IMR-90 (cell line): ENCODE measurements at regions of chr1 and their contacts with region 1.

Region 1: DNA sequence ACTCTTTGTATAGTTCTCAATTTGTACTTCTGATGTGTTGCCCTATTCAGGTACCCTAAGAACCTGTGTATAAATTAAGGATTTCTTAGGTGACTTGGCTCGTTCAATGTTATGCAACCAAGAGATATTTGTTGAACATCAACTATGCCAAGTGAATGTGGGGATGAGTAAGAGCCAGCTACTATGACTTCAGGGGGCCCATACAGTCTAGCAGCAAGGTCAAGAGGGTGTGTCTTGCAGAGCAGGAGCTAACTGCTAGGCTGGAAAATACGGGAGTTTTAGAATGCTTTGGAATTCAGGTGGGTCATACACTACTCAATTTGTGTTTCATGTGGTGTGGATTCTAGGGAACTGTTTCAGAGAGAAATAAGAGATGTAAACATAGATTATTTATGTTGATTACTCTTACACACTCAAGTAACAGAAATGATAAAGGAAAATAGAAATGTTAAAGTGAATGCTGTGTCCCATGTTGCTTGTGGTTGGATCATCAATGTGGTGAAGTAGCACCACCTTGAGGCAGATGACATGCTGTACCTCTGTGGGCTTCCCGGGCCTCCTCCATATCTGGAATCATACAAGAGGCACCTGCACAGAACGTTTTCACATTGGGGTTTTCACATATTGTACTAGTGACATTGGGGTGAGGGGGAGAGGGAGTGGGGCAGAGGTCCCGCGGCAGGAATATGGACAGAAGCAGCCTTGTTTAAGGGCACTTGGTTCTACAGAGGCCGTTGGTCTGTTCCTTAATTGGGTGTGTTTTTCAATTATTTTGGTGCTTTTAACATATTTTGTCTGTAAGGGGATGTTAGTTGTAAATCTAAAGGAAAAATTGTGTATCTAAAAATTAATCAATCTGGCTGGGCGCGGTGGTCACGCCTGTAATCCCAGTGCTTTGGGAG is 12.4 kb downstream of the ARPC5 start:
- DNase-seq: peak; percentile 78
- ATAC-seq: peak; percentile 86
- H3K4me3 ChIP-seq: no peak overlapping the region
- H3K27ac ChIP-seq: no peak overlapping the region
- H3K4me1 ChIP-seq: peaks cover 3% of the 10 kb centered on the region
- H3K27me3 ChIP-seq: no peaks in the 10 kb centered on the region
- CTCF ChIP-seq: peak; percentile 73
- POLR2A ChIP-seq: no peak
- RAD21 ChIP-seq: peak; percentile 85

Region 2: DNA sequence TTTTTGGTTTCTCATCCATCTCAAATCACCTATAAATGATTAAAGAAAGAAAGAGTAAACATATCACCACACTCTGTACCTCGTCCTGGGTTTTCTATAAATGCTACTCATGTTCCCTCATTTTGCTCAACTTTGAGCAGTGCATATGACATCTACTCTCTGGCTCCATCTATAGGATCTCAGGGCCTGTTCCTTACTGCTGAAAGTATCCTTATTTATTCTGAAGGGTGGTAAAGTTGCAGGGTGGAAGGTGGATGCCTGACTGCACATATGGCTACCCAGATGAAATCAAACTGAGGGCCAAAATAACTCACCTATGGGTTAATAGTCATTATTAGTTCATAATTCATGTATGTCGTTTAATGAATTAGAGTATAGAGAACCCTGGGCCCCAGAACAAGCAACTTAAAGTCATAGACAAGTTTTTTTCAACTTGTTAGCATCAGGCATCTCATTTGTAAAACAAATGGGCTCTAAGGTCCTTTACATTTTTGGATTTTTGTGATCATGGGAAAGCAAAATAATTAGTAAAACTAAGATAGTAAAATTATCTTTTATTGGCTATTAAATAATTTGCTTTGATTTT is 79.4 kb before region 1 on chr1:
- CTCF ChIA-PET with region 1: interaction called, 3 read pairs
- POLR2A ChIA-PET with region 1: no interaction called
- dilution Hi-C with region 1: no loop called
- in situ Hi-C with region 1: no loop called
- intact Hi-C with region 1: loop called (anchors 1 kb)
- DNase-seq: peak; percentile 74
- ATAC-seq: peak; percentile 99
- H3K4me3 ChIP-seq: no peak overlapping the region
- H3K27ac ChIP-seq: no peak overlapping the region
- H3K4me1 ChIP-seq: no peaks in the 10 kb centered on the region; the same call in 1 of the 2 replicates
- H3K27me3 ChIP-seq: no peaks in the 10 kb centered on the region
- CTCF ChIP-seq: peak; percentile 79
- POLR2A ChIP-seq: no peak
- RAD21 ChIP-seq: peak; percentile 82

Region 3: DNA sequence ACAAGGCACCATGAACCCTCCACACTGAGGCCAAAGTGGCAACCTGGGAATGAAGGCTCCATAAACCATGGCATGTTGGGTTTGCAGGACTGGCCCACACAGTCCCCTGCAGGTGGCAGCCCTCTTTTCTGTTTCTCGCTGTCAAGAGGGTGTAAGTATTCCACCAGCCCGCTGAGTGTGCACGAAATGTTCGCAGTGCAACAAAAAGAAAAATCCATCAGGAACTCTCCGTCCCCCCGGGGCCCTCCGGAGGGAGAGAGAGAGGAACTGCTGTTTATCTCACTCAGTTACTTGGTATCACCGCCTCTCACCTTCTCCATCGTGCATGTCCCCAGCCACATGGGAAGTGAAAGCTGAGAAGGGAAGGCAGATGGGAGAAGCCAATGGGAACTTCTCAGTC is 71.2 kb before region 1 on chr1:
- CTCF ChIA-PET with region 1: no interaction called
- POLR2A ChIA-PET with region 1: no interaction called
- dilution Hi-C with region 1: no loop called
- in situ Hi-C with region 1: no loop called
- intact Hi-C with region 1: loop called (anchors 2 kb)
- DNase-seq: no peak
- ATAC-seq: no peak
- H3K4me3 ChIP-seq: no peak overlapping the region
- H3K27ac ChIP-seq: no peak overlapping the region
- H3K4me1 ChIP-seq: peaks cover 3% of the 10 kb centered on the region
- H3K27me3 ChIP-seq: no peaks in the 10 kb centered on the region
- CTCF ChIP-seq: no peak
- POLR2A ChIP-seq: no peak
- RAD21 ChIP-seq: no peak

Region 4: GRCh38 chr1:183580281-183580682 is 42.9 kb before region 1 on chr1:
- CTCF ChIA-PET with region 1: no interaction called
- POLR2A ChIA-PET with region 1: no interaction called
- dilution Hi-C with region 1: no loop called
- in situ Hi-C with region 1: no loop called
- intact Hi-C with region 1: no loop called
- DNase-seq: no peak
- ATAC-seq: no peak
- H3K4me3 ChIP-seq: no peak overlapping the region
- H3K27ac ChIP-seq: no peak overlapping the region
- H3K4me1 ChIP-seq: 0 out of 2 replicates have a peak, but pooled peaks cover 4% of the 10 kb centered on the region
- H3K27me3 ChIP-seq: peaks cover 6% of the 10 kb centered on the region
- CTCF ChIP-seq: no peak
- POLR2A ChIP-seq: no peak
- RAD21 ChIP-seq: no peak

Region 5: DNA sequence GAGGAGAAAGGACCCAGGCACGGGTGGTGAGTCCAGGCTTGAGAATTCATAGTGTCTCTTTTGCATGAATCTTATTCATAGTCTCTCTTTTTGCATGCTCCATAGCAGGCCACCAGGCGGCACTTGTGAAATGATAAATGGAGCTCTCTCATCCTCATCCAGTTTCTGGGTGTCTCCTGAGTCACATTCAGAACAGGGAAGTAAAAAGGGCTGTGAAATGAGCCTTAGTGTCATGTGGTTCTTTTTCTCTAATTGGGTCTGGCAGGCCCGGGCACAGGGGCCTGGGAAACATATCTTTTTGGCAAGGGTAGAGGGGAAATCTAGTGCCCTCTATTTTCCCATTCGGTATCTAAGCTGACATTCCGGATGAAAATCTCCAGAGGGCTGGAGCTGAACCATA is 13.8 kb before region 1 on chr1:
- CTCF ChIA-PET with region 1: interaction called, 5 read pairs
- POLR2A ChIA-PET with region 1: no interaction called
- dilution Hi-C with region 1: no loop called
- in situ Hi-C with region 1: no loop called
- intact Hi-C with region 1: loop called (anchors 1 kb)
- DNase-seq: peak; percentile 81
- ATAC-seq: peak; percentile 54
- H3K4me3 ChIP-seq: no peak overlapping the region
- H3K27ac ChIP-seq: peak overlapping the region; percentile 24
- H3K4me1 ChIP-seq: peaks cover 20% of the 10 kb centered on the region
- H3K27me3 ChIP-seq: no peaks in the 10 kb centered on the region
- CTCF ChIP-seq: peak; percentile 55
- POLR2A ChIP-seq: no peak
- RAD21 ChIP-seq: peak; percentile 61

Region 6: GRCh38 chr1:183932412-183932811 is 309.3 kb after region 1 on chr1:
- CTCF ChIA-PET with region 1: no interaction called
- POLR2A ChIA-PET with region 1: no interaction called
- dilution Hi-C with region 1: no loop called
- in situ Hi-C with region 1: no loop called
- intact Hi-C with region 1: no loop called
- DNase-seq: peak; percentile 90
- ATAC-seq: peak; percentile 89
- H3K4me3 ChIP-seq: no peak overlapping the region
- H3K27ac ChIP-seq: no peak overlapping the region
- H3K4me1 ChIP-seq: peaks cover 3% of the 10 kb centered on the region
- H3K27me3 ChIP-seq: no peaks in the 10 kb centered on the region
- CTCF ChIP-seq: no peak
- POLR2A ChIP-seq: no peak
- RAD21 ChIP-seq: no peak